A673 (cell line): ENCODE measurements at regions of chr17 and their contacts with region 1.

Region 1: GRCh38 chr17:50931144-50931908 is 65.2 kb upstream of the TOB1 start:
- DNase-seq: peak; percentile 71
- H3K4me3 ChIP-seq: peak overlapping the region; percentile 37
- H3K27ac ChIP-seq: no peak overlapping the region
- H3K4me1 ChIP-seq: peaks cover 6% of the 10 kb centered on the region
- H3K27me3 ChIP-seq: no peaks in the 10 kb centered on the region
- CTCF ChIP-seq: no peak

Region 2: DNA sequence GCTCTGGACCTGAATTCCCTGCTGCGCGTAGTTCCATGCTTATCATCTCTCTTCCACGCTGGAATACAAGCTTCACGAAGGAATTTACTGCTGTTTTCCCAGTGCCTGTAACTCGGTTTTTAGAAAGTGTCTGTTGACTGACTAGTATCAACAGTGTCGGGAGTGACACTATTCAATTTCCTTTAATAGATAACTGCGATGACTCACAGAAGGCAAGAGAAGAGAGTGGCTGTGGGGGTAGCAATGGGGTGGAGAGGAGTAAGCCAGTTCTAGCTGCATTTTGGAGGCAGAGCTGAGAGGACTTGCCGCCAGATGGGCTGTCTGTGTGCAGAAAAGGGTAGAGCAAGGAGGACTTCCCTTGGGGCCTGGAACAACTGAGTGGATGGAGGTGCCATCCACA is 1773.5 kb before region 1 on chr17:
- CTCF ChIA-PET with region 1: no interaction called
- POLR2A ChIA-PET with region 1: no interaction called
- intact Hi-C with region 1: no loop called
- DNase-seq: peak; percentile 29
- H3K4me3 ChIP-seq: no peak overlapping the region
- H3K27ac ChIP-seq: no peak overlapping the region
- H3K4me1 ChIP-seq: no peaks in the 10 kb centered on the region
- H3K27me3 ChIP-seq: no peaks in the 10 kb centered on the region
- CTCF ChIP-seq: no peak

Region 3: GRCh38 chr17:51166197-51166986 is 235.1 kb after region 1 on chr17 and contains the start of gene NME2:
- CTCF ChIA-PET with region 1: no interaction called
- POLR2A ChIA-PET with region 1: interaction called, 12 read pairs
- intact Hi-C with region 1: no loop called
- DNase-seq: peak; percentile 82
- H3K4me3 ChIP-seq: peak within 1 kb of the TSS; percentile 64
- H3K27ac ChIP-seq: peak within 1 kb of the TSS; percentile 82
- H3K4me1 ChIP-seq: peaks cover 17% of the 10 kb centered on the region
- H3K27me3 ChIP-seq: no peaks in the 10 kb centered on the region
- CTCF ChIP-seq: no peak
- total RNA-seq, gene NME2: 776 and 780 TPM in 2 replicates

Region 4: DNA sequence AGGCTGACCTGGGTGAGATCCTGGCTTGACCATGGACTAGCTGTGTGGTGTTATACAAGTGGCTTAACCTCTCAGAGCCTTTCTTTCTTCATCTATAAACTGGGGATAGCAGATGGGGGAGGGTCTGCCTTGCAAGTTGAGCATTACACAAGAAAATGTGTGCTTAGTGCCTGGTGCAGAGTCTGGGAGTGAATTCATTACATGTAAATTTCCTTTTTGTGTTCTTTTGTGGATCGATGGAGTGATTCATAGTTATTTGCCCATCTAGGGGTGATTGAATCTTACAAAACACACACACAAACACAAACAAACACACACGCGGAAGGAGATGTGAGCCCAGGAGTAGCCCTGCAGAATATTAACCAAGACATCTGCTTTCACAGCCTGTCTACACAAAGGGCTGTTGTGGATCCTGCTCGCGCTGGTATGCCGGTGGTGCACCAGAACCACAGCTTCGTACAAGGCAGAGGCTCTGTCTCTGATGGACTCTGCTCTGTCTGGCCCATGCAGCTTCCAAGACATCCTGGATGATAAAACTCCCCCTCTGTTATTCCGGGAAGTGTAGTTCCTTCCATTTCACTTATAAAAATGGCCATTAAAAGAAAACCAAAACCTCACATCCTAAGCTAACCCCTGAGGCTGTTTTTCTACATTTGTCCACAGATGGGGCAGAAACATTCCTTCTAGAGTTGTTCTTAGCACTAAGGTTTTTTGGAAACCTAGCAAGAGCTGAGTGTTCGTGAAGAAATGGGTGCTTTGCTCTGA is 415.1 kb after region 1 on chr17:
- CTCF ChIA-PET with region 1: no interaction called
- POLR2A ChIA-PET with region 1: no interaction called
- intact Hi-C with region 1: no loop called
- DNase-seq: no peak
- H3K4me3 ChIP-seq: no peak overlapping the region
- H3K27ac ChIP-seq: no peak overlapping the region
- H3K4me1 ChIP-seq: no peaks in the 10 kb centered on the region
- H3K27me3 ChIP-seq: peaks cover 35% of the 10 kb centered on the region
- CTCF ChIP-seq: no peak